Calu3 (cell line): ENCODE measurements at regions of chr2 and their contacts with region 1.

Region 1: DNA sequence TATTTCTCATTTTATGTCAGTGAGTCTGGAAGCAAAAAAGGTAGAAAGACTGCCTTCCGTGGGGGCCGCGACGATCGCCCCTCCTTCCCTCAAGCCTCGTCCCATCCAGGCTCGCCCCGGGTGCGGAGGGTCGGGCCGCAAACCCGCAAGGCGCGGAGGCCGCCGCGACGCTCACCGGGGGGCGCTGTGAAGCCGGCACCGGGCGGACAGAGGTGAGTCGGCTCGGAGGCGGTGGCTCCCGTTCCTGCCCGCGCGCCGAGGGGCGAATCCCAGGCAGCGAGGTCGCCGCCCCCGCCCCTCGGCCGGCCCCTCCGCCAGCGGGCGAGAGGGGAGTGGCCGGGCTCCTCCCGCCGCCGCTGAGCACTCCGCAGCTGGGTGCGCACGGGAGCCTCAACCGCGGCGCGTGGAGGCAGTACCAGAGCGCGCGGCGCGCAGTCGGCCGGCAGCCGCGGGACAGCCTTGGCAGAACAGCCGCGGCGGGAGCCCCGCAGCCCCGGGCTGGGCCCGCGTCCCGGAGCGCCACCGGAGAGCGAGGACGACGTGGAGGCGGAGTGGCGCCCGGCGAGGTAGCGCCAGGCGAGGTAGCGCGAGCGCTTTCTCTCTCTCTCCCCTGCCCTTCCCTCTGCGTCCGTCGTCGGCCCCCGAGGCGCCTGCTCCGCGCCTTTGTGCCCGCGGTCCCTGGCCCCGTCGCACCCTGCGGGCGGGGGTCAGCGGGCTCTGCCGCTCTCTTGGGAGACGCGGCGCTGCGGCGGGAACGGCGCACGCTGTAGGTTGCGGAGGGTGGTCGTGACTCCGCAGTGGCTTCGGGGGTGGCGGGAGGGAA is at the start of gene MYO1B:
- DNase-seq: peak; percentile 92
- H3K4me3 Mint-ChIP-seq: peak within 1 kb of the TSS; percentile 80
- H3K27ac Mint-ChIP-seq: peak within 1 kb of the TSS; percentile 95
- H3K4me1 Mint-ChIP-seq: peaks cover 39% of the 10 kb centered on the region
- H3K27me3 Mint-ChIP-seq: no peaks in the 10 kb centered on the region
- CTCF ChIP-seq: peak; percentile 44
- total RNA-seq, gene MYO1B: 56.7 and 64.5 TPM in 2 replicates

Region 2: GRCh38 chr2:190812506-190813294 is 432.6 kb before region 1 on chr2:
- CTCF ChIA-PET with region 1: no interaction called
- intact Hi-C with region 1: no loop called
- DNase-seq: no peak
- H3K4me3 Mint-ChIP-seq: no peak overlapping the region
- H3K27ac Mint-ChIP-seq: no peak overlapping the region
- H3K4me1 Mint-ChIP-seq: peaks cover 20% of the 10 kb centered on the region
- H3K27me3 Mint-ChIP-seq: no peaks in the 10 kb centered on the region
- CTCF ChIP-seq: no peak

Region 3: GRCh38 chr2:191302459-191303139 is 57.3 kb after region 1 on chr2:
- CTCF ChIA-PET with region 1: interaction called, 3 read pairs
- intact Hi-C with region 1: loop called (anchors 5 kb)
- DNase-seq: peak; percentile 46
- H3K4me3 Mint-ChIP-seq: no peak overlapping the region
- H3K27ac Mint-ChIP-seq: no peak overlapping the region
- H3K4me1 Mint-ChIP-seq: peaks cover 36% of the 10 kb centered on the region
- H3K27me3 Mint-ChIP-seq: no peaks in the 10 kb centered on the region
- CTCF ChIP-seq: peak; percentile 36

Region 4: GRCh38 chr2:191382801-191383200 is 137.5 kb after region 1 on chr2:
- CTCF ChIA-PET with region 1: no interaction called
- intact Hi-C with region 1: loop called (anchors 5 kb)
- DNase-seq: peak; percentile 72
- H3K4me3 Mint-ChIP-seq: no peak overlapping the region
- H3K27ac Mint-ChIP-seq: peak overlapping the region; percentile 38
- H3K4me1 Mint-ChIP-seq: peaks cover 47% of the 10 kb centered on the region
- H3K27me3 Mint-ChIP-seq: no peaks in the 10 kb centered on the region
- CTCF ChIP-seq: no peak

Region 5: GRCh38 chr2:191501561-191502168 is 256.4 kb after region 1 on chr2:
- CTCF ChIA-PET with region 1: no interaction called
- intact Hi-C with region 1: loop called (anchors 1 kb)
- DNase-seq: no peak
- H3K4me3 Mint-ChIP-seq: no peak overlapping the region
- H3K27ac Mint-ChIP-seq: no peak overlapping the region
- H3K4me1 Mint-ChIP-seq: peaks cover 2% of the 10 kb centered on the region
- H3K27me3 Mint-ChIP-seq: no peaks in the 10 kb centered on the region
- CTCF ChIP-seq: peak; percentile 41